ENCODE measurements at regions of chr12 and their contacts with region 1.

Region 1: DNA sequence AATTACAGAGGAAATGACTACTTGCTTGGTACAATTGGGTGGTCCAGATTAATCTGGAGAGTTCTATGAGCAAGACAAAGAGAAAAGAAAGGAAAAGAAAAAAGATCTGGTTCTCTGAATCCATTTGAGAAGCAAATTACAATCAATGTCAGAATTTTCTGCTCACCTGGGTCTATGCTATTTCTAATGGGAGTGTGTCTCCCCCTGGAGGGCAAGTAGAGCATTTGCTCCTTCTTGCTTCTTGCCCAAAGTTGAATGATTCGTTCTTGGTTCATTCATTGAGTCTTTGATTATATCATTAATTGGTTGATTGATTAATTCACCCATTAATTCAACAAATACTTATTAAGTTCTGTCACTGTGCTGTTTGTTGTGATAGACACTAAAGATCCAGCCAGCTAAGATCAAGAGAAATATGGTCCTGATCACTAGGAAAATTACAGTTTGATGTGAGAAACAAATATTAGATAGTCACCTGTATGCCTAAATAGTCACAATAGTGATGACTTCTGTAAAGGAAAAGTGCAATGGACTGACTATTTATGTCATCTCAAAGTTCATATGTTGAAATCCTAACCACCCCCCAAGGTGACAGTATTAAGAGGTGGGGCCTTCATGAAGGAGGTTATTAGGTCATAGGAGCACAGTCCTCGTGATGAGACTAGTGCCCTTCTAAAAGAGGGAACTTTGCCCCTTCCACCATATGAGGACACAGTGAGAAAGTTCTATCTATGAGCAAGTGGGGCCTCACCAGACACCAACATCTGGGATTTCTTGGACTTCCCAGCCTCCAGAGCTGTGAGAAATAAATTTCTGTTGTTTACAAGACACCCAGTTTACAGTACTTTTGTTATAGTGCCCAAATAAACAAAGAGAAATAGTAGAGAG is 8.0 kb upstream of the ASB8 start:
- DNase-seq: peak; percentile 79
- ATAC-seq: peak; percentile 82
- H3K4me3 ChIP-seq: no peak overlapping the region
- H3K4me3 Mint-ChIP-seq: no peak overlapping the region
- H3K27ac ChIP-seq: no peak overlapping the region
- H3K27ac Mint-ChIP-seq: no peak overlapping the region
- H3K4me1 ChIP-seq: no peaks in the 10 kb centered on the region
- H3K4me1 Mint-ChIP-seq: no peaks in the 10 kb centered on the region
- H3K27me3 ChIP-seq: peaks cover 0 to 13% (median 1%) of the 10 kb centered on the region in 4 experiments
- H3K27me3 Mint-ChIP-seq: peaks cover 22% of the 10 kb centered on the region
- CTCF ChIP-seq: peak; percentile 96

Region 2: GRCh38 chr12:47785036-47785886 is 380.1 kb before region 1 on chr12:
- CTCF ChIA-PET with region 1: no interaction called
- POLR2A ChIA-PET with region 1: no interaction called
- intact Hi-C with region 1: no loop called
- DNase-seq: no peak
- ATAC-seq: no peak
- H3K4me3 ChIP-seq: no peak overlapping the region
- H3K4me3 Mint-ChIP-seq: no peak overlapping the region
- H3K27ac ChIP-seq: no peak overlapping the region
- H3K27ac Mint-ChIP-seq: peak overlapping the region; percentile 32
- H3K4me1 ChIP-seq: no peaks in the 10 kb centered on the region
- H3K4me1 Mint-ChIP-seq: peaks cover 2% of the 10 kb centered on the region
- H3K27me3 ChIP-seq: no peaks in the 10 kb centered on the region
- H3K27me3 Mint-ChIP-seq: no peaks in the 10 kb centered on the region
- CTCF ChIP-seq: no peak

Region 3: GRCh38 chr12:47904713-47905310 is 260.5 kb before region 1 on chr12 and contains the start of gene VDR:
- CTCF ChIA-PET with region 1: interaction called, 4 read pairs
- POLR2A ChIA-PET with region 1: no interaction called
- intact Hi-C with region 1: loop called (anchors 10 kb)
- DNase-seq: peak; percentile 77
- ATAC-seq: peak; percentile 85
- H3K4me3 ChIP-seq: peak within 1 kb of the TSS; percentile 55 to 82 (median 64)
- H3K4me3 Mint-ChIP-seq: peak within 1 kb of the TSS; percentile 90
- H3K27ac ChIP-seq: peak within 1 kb of the TSS in 1 of 2 donors; percentile 6
- H3K27ac Mint-ChIP-seq: peak within 1 kb of the TSS; percentile 54
- H3K4me1 ChIP-seq: peaks cover 26 to 34% of the 10 kb centered on the region in 2 donors
- H3K4me1 Mint-ChIP-seq: peaks cover 36% of the 10 kb centered on the region
- H3K27me3 ChIP-seq: peaks cover 0 to 57% (median 21%) of the 10 kb centered on the region in 4 experiments
- H3K27me3 Mint-ChIP-seq: peaks cover 26% of the 10 kb centered on the region
- CTCF ChIP-seq: no peak
- total RNA-seq, gene VDR: 0.37 and 0.53 TPM in 2 replicates

Region 4: DNA sequence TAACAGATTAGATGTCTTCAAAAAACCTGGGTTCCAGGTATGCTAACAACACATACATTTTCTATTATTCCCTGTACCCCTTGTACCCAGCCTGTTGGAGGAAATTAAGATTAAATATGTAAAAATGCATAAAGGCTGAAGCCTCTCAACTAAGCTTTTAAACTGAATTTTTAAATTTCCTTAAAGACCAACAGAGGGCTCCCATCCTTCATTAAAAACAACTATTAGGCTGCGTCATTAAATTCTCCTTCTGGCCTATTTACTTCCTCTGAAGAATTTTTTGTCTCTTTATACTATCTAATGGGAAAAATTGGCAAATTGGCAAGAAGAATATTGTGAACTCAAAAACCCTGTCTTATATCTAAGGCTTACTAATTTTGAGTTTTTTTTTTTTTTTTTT is 81.3 kb before region 1 on chr12:
- CTCF ChIA-PET with region 1: interaction called, 28 read pairs
- POLR2A ChIA-PET with region 1: no interaction called
- intact Hi-C with region 1: loop called (anchors 1 kb)
- DNase-seq: peak; percentile 26
- ATAC-seq: no peak
- H3K4me3 ChIP-seq: no peak overlapping the region
- H3K4me3 Mint-ChIP-seq: no peak overlapping the region
- H3K27ac ChIP-seq: no peak overlapping the region
- H3K27ac Mint-ChIP-seq: no peak overlapping the region
- H3K4me1 ChIP-seq: peaks cover 0 to 9% of the 10 kb centered on the region in 2 donors
- H3K4me1 Mint-ChIP-seq: peaks cover 5% of the 10 kb centered on the region
- H3K27me3 ChIP-seq: no peaks in the 10 kb centered on the region
- H3K27me3 Mint-ChIP-seq: no peaks in the 10 kb centered on the region
- CTCF ChIP-seq: peak; percentile 35

Region 5: GRCh38 chr12:48183091-48183875 is 17.9 kb after region 1 on chr12 and contains the start of gene CCDC184:
- CTCF ChIA-PET with region 1: interaction called, 14 read pairs
- POLR2A ChIA-PET with region 1: no interaction called
- intact Hi-C with region 1: loop called (anchors 2 kb)
- DNase-seq: peak; percentile 89
- ATAC-seq: peak; percentile 75
- H3K4me3 ChIP-seq: peak within 1 kb of the TSS; percentile 69 to 90 (median 77)
- H3K4me3 Mint-ChIP-seq: peak within 1 kb of the TSS; percentile 98
- H3K27ac ChIP-seq: peak within 1 kb of the TSS in 1 of 2 donors; percentile 11
- H3K27ac Mint-ChIP-seq: peak within 1 kb of the TSS; percentile 84
- H3K4me1 ChIP-seq: peaks cover 27 to 29% of the 10 kb centered on the region in 2 donors
- H3K4me1 Mint-ChIP-seq: peaks cover 28% of the 10 kb centered on the region
- H3K27me3 ChIP-seq: peaks cover 0 to 38% (median 15%) of the 10 kb centered on the region in 4 experiments
- H3K27me3 Mint-ChIP-seq: peaks cover 37% of the 10 kb centered on the region
- CTCF ChIP-seq: peak; percentile 45
- total RNA-seq, gene CCDC184: 0.54 and 0.66 TPM in 2 replicates

Region 6: DNA sequence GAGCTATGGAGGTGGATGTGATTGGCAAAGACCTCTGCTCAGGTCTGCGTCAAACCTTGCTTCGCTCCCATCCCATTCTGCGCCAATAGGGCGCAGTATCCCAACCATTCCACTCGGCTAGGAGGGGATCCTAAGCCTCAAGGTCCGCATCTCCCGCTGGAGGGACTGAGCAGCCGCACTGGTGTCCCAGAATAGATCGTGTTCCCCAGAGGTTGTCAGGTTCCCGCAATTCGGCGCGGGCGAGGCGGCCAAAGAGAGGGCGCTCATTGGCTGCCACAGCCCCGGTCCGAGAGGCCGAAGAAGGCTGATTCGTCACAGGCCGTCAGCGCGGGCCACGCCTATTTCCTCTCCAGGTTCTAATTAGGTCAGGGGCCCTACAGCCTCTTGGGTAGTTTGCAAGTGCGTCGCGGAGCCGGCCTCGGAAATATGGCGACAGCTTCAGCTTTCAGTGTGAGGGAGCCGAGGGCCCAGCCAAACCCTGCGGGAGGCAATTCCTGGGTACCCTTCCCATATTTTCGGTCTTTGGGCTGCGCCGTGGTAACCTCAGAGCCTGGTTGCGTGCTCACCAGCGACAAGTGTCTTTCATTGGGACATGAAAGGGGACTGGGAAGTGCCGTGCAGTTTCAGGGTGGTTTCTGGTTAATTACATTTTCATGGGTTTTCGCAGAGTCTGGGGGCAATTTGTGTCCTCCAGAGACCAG is 32.8 kb after region 1 on chr12:
- CTCF ChIA-PET with region 1: interaction called, 6 read pairs
- POLR2A ChIA-PET with region 1: no interaction called
- intact Hi-C with region 1: loop called (anchors 2 kb)
- DNase-seq: peak; percentile 95
- ATAC-seq: peak; percentile 99
- H3K4me3 ChIP-seq: peak overlapping the region; percentile 76 to 100 (median 96)
- H3K4me3 Mint-ChIP-seq: peak overlapping the region; percentile 87
- H3K27ac ChIP-seq: peak overlapping the region; percentile 97 to 98
- H3K27ac Mint-ChIP-seq: peak overlapping the region; percentile 99
- H3K4me1 ChIP-seq: peaks cover 18 to 20% of the 10 kb centered on the region in 2 donors
- H3K4me1 Mint-ChIP-seq: peaks cover 23% of the 10 kb centered on the region
- H3K27me3 ChIP-seq: peaks cover 0 to 12% (median 0%) of the 10 kb centered on the region in 4 experiments
- H3K27me3 Mint-ChIP-seq: peaks cover 18% of the 10 kb centered on the region
- CTCF ChIP-seq: no peak